ENCODE measurements at regions of chr20 and their contacts with region 1.

Region 1: DNA sequence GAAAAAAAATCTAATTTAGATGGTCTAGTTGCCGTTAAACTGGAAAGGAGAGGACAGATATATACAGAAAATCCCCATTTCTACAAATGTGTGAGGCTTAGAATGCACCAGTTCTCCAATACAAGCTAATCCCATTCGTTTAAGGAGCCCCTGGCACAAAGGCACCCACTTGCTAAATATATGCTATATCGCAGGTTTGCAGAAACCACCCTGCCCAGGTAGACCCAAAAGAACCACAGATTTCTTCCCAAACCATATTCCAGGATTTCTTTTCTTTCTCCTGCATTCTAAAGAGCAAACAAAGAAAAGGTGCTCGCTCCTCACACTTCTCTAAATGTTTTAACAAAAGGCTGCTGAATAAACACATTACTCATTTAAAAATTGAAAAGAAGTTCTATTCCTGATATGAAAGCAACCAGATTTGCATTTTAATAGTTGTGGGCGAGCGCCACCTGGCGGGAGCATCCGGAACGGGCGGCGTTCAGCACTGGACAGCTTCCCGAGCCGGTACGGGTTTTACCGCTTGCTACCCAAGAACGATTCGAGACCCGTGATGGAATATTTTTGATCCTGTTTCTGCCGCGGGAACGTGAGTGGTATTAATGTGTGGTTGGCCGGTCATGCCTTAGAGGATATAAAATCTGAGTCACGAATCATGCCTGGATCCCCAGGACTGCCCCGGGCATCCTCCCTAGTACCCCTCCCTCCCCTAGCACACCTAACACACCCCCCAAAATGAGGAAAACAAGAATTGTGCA is 2.1 kb downstream of the PTPRT start:
- DNase-seq: peak; percentile 64
- H3K4me3 ChIP-seq: no peak overlapping the region
- H3K27ac ChIP-seq: no peak overlapping the region
- H3K4me1 ChIP-seq: peaks cover 0 to 6% (median 3%) of the 10 kb centered on the region in 4 donors
- H3K27me3 ChIP-seq: peaks cover 44% of the 10 kb centered on the region
- CTCF ChIP-seq: peak; percentile 79 to 94 (median 88)
- EP300 ChIP-seq: no peak
- POLR2A ChIP-seq: no peak

Region 2: DNA sequence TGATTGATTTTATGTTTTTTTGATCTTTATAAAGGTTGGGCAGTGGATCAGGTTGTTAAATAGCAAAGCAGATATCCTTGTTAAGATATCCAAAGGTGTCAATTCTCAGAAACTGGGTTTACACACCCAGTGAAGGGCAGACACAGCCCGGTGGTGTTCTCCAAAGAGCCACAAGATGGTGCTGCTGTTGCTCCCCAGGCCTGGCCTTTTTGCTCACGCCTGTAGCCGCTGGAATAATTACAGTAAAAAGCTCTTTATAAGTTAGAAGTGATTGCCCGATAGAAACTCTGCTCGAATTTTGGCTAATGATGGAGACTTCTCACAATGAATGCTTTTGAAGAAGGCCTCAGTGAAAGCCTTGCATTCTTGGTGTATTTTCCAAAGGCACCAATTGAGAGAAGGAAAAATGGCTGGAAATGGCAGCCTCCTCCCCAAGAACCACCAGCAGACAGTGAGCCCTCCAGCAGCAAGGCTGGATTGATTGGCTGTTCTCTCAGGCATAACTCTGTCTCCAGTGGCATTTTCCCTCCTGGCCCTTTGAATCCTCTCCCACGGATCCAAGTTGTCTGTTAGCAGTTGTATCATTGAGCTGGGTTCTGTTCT is 1449.0 kb before region 1 on chr20:
- in situ Hi-C with region 1: loop called (anchors 10 to 25 kb)
- intact Hi-C with region 1: loop called (anchors 2 kb)
- DNase-seq: peak; percentile 35
- H3K4me3 ChIP-seq: no peak overlapping the region
- H3K27ac ChIP-seq: no peak overlapping the region
- H3K4me1 ChIP-seq: no peaks in the 10 kb centered on the region
- H3K27me3 ChIP-seq: no peaks in the 10 kb centered on the region
- CTCF ChIP-seq: peak; percentile 48 to 78 (median 73)
- EP300 ChIP-seq: no peak
- POLR2A ChIP-seq: no peak

Region 3: GRCh38 chr20:41746634-41747033 is 1441.0 kb before region 1 on chr20:
- in situ Hi-C with region 1: loop called (anchors 10 to 25 kb)
- intact Hi-C with region 1: no loop called
- DNase-seq: no peak
- H3K4me3 ChIP-seq: no peak overlapping the region
- H3K27ac ChIP-seq: no peak overlapping the region
- H3K4me1 ChIP-seq: no peaks in the 10 kb centered on the region
- H3K27me3 ChIP-seq: no peaks in the 10 kb centered on the region
- CTCF ChIP-seq: no peak
- EP300 ChIP-seq: no peak
- POLR2A ChIP-seq: no peak

Region 4: DNA sequence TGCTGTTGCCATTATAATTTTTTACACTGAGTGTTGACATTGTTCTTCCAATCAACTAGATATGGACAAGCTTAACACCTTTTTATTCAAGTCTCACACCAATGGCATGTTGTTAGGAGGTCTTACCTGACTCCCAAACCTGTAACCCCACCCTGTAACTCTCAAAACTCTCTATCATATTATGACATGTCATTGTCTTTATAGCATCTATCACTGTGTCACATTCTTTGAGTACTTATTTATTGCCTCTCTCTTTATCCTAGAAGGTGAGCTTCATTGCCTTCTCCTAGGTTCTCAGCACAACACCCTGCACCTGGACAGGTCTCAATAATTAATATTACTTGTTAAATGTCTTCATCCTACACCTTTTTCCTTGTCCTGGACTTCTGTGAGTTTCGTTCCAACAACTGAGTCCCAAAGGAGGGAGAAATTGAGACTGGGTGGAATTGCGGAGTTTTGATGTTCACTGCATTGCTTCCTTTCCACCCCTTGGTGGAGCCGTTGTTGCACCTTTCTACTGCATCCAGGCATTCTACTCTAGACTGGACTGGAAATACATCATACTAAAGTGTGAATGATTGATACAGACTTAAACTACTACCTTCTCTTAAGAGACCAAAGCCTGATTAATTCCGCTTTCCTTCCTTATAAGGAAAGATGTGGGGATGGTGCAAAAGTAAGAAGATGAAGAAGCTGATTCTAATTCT is 1231.5 kb before region 1 on chr20:
- in situ Hi-C with region 1: loop called in 1 of 4 experiments (anchors 25 kb)
- intact Hi-C with region 1: no loop called
- DNase-seq: no peak
- H3K4me3 ChIP-seq: no peak overlapping the region
- H3K27ac ChIP-seq: no peak overlapping the region
- H3K4me1 ChIP-seq: no peaks in the 10 kb centered on the region
- H3K27me3 ChIP-seq: no peaks in the 10 kb centered on the region
- CTCF ChIP-seq: peak; percentile 14 to 41 (median 36)
- EP300 ChIP-seq: no peak
- POLR2A ChIP-seq: no peak

Region 5: DNA sequence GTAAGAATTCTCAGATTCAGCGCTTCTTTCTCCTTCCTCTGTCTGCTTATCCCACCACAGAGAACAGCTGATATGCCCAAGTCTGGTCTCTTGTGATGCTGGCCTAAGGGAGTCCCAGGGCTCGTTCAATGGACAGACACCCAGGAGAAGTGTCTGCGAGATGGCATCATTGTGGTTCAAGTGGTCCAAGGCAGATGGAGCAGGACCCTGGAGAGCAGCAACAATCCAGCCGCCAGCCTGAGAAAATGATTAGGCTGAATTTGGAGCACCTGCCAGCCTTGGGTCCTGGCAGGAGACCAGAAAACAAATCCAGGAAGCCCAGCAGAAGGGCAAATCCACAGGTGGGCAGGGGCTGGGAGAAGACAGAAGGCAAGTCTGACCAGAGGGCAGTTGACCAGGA is 143.8 kb before region 1 on chr20:
- in situ Hi-C with region 1: no loop called
- intact Hi-C with region 1: no loop called
- DNase-seq: no peak
- H3K4me3 ChIP-seq: no peak overlapping the region
- H3K27ac ChIP-seq: no peak overlapping the region
- H3K4me1 ChIP-seq: no peaks in the 10 kb centered on the region
- H3K27me3 ChIP-seq: no peaks in the 10 kb centered on the region
- CTCF ChIP-seq: no peak
- EP300 ChIP-seq: no peak
- POLR2A ChIP-seq: no peak

Region 6: GRCh38 chr20:43096126-43096930 is 91.3 kb before region 1 on chr20:
- in situ Hi-C with region 1: loop called in 1 of 4 experiments (anchors 25 kb)
- intact Hi-C with region 1: no loop called
- DNase-seq: no peak
- H3K4me3 ChIP-seq: no peak overlapping the region
- H3K27ac ChIP-seq: no peak overlapping the region
- H3K4me1 ChIP-seq: no peaks in the 10 kb centered on the region
- H3K27me3 ChIP-seq: no peaks in the 10 kb centered on the region
- CTCF ChIP-seq: no peak
- EP300 ChIP-seq: no peak
- POLR2A ChIP-seq: no peak

Region 7: GRCh38 chr20:43293063-43293786 is 105.6 kb after region 1 on chr20:
- in situ Hi-C with region 1: loop called in 1 of 4 experiments (anchors 25 kb)
- intact Hi-C with region 1: no loop called
- DNase-seq: no peak
- H3K4me3 ChIP-seq: no peak overlapping the region
- H3K27ac ChIP-seq: no peak overlapping the region
- H3K4me1 ChIP-seq: no peaks in the 10 kb centered on the region
- H3K27me3 ChIP-seq: no peaks in the 10 kb centered on the region
- CTCF ChIP-seq: no peak
- EP300 ChIP-seq: no peak
- POLR2A ChIP-seq: no peak

Region 8: GRCh38 chr20:43408848-43409576 is 221.4 kb after region 1 on chr20:
- in situ Hi-C with region 1: loop called in 1 of 4 experiments (anchors 25 kb)
- intact Hi-C with region 1: no loop called
- DNase-seq: no peak
- H3K4me3 ChIP-seq: no peak overlapping the region
- H3K27ac ChIP-seq: no peak overlapping the region
- H3K4me1 ChIP-seq: no peaks in the 10 kb centered on the region
- H3K27me3 ChIP-seq: peaks cover 25% of the 10 kb centered on the region
- CTCF ChIP-seq: peak in 4 of 5 experiments; percentile 32 to 48 (median 39)
- EP300 ChIP-seq: no peak
- POLR2A ChIP-seq: no peak

Measured in transverse colon (tissue), 4 donors.